ENCODE measurements at regions of chr6 and their contacts with region 1.

Region 1: GRCh38 chr6:63598049-63599036 is 26.1 kb downstream of the LOC128125822 start:
- DNase-seq: peak; percentile 25 to 75
- H3K4me3 ChIP-seq: peak overlapping the region; percentile 36 to 65
- H3K27ac ChIP-seq: no peak overlapping the region
- H3K4me1 ChIP-seq: peaks cover 0 to 4% of the 10 kb centered on the region in 2 donors
- H3K27me3 ChIP-seq: no peaks in the 10 kb centered on the region
- CTCF ChIP-seq: peak; percentile 77 to 93 (median 78)

Region 2: DNA sequence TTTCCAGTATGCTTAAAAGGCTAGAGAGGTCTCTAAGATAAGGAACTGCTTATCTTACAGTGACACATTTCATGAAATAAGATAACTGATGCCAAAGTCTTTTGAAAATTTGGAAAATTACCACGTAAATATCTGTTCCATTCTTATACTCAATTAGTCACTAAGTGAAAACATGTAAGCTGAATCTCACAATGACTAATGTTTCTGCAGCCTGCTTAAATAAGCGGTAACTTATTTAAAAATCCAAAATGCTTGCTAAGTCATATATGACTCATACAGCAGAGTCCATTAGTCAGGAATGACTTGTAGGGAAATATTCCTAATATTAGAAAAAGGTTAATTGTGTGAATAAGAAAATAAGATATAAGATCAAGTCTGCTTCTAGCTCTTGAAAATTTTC is 250.7 kb before region 1 on chr6:
- intact Hi-C with region 1: loop called (anchors 10 kb)
- DNase-seq: no peak
- H3K4me3 ChIP-seq: no peak overlapping the region
- H3K27ac ChIP-seq: no peak overlapping the region
- H3K4me1 ChIP-seq: no peaks in the 10 kb centered on the region
- H3K27me3 ChIP-seq: no peaks in the 10 kb centered on the region
- CTCF ChIP-seq: no peak

Region 3: GRCh38 chr6:63635588-63636517 is 37.5 kb after region 1 on chr6 and contains the start of gene PHF3:
- intact Hi-C with region 1: loop called (anchors 2 kb)
- DNase-seq: peak; percentile 21 to 91
- H3K4me3 ChIP-seq: peak within 1 kb of the TSS; percentile 80 to 82
- H3K27ac ChIP-seq: peak within 1 kb of the TSS; percentile 88 to 96
- H3K4me1 ChIP-seq: peaks cover 0 to 21% of the 10 kb centered on the region in 2 donors
- H3K27me3 ChIP-seq: no peaks in the 10 kb centered on the region
- CTCF ChIP-seq: peak in 2 of 3 experiments; percentile 1 to 14
- total RNA-seq, gene PHF3: 31.5 TPM

Region 4: DNA sequence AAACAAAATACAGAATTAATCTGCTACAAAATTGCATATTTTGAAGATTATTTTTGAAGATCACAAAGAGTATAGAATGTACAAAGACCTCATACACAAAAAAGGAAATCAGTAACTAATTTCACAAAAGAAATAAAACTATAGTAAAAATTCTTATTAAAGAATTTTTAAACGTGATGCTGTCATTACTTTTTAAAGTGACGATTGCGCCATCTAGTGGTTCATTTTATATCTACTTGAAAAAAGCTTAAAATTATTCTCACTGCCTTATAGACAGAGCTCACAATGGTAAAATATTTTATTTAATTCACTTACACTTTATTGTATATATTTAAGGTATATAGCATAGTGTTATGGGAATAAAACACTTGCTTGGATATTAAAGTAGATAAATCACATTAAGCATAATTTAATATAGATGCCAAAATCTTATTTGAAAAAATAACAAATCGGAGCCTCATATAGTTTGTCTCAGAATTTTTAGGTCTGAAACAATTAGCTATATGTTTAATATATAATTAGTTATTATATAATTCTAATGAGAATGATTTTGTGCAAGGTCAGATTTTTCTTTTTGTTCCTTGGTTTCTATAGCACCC is 166.1 kb after region 1 on chr6:
- intact Hi-C with region 1: loop called (anchors 1 kb)
- DNase-seq: no peak
- H3K4me3 ChIP-seq: no peak overlapping the region
- H3K27ac ChIP-seq: no peak overlapping the region
- H3K4me1 ChIP-seq: no peaks in the 10 kb centered on the region
- H3K27me3 ChIP-seq: no peaks in the 10 kb centered on the region
- CTCF ChIP-seq: peak; percentile 44 to 57 (median 51)

Measured in ascending aorta (tissue), 2 donors.